GM12878 (cell line): ENCODE measurements at regions of chr11 and their contacts with region 1.

Region 1: DNA sequence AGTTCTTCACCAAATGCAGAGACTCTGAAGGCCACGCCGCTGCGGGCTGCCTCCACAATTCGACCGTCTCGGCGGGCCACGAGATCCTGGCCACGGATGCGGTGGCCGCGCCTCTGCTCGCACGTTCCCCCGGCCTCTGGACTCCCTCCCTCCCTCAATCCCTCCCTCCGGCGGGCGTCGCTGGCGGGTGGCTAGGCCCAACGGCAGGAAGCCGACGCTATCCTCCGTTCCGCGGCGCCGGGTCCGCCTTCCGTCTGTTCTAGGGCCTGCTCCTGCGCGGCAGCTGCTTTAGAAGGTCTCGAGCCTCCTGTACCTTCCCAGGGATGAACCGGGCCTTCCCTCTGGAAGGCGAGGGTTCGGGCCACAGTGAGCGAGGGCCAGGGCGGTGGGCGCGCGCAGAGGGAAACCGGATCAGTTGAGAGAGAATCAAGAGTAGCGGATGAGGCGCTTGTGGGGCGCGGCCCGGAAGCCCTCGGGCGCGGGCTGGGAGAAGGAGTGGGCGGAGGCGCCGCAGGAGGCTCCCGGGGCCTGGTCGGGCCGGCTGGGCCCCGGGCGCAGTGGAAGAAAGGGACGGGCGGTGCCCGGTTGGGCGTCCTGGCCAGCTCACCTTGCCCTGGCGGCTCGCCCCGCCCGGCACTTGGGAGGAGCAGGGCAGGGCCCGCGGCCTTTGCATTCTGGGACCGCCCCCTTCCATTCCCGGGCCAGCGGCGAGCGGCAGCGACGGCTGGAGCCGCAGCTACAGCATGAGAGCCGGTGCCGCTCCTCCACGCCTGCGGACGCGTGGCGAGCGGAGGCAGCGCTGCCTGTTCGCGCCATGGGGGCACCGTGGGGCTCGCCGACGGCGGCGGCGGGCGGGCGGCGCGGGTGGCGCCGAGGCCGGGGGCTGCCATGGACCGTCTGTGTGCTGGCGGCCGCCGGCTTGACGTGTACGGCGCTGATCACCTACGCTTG is at the start of gene FUT4:
- DNase-seq: no peak
- ATAC-seq: peak; percentile 88
- H3K4me3 ChIP-seq: peak within 1 kb of the TSS; percentile 80
- H3K27ac ChIP-seq: peak within 1 kb of the TSS; percentile 79
- H3K4me1 ChIP-seq: no peaks in the 10 kb centered on the region
- H3K27me3 ChIP-seq: no peaks in the 10 kb centered on the region
- CTCF ChIP-seq: peak in 1 of 3 experiments; percentile 2; a peak in 2 of 6 replicates
- EP300 ChIP-seq: no peak
- POLR2A ChIP-seq: peak; percentile 80
- RAD21 ChIP-seq: no peak
- polyA plus RNA-seq, gene FUT4: 0.68 TPM

Region 2: GRCh38 chr11:94563176-94563847 is 19.3 kb after region 1 on chr11:
- CTCF ChIA-PET with region 1: interaction called, 12 read pairs
- POLR2A ChIA-PET with region 1: interaction called, 4 read pairs
- RAD21 ChIA-PET with region 1: interaction called, 4 read pairs
- SMC1A ChIA-PET with region 1: interaction called, 8 read pairs
- in situ Hi-C with region 1: no loop called
- intact Hi-C with region 1: no loop called
- DNase-seq: no peak
- ATAC-seq: no peak
- H3K4me3 ChIP-seq: no peak overlapping the region
- H3K27ac ChIP-seq: no peak overlapping the region
- H3K4me1 ChIP-seq: no peaks in the 10 kb centered on the region
- H3K27me3 ChIP-seq: no peaks in the 10 kb centered on the region
- CTCF ChIP-seq: no peak
- EP300 ChIP-seq: no peak
- POLR2A ChIP-seq: no peak
- RAD21 ChIP-seq: no peak

Region 3: GRCh38 chr11:94583866-94584500 is 40.0 kb after region 1 on chr11:
- CTCF ChIA-PET with region 1: interaction called, 17 read pairs
- POLR2A ChIA-PET with region 1: interaction called, 27 read pairs
- RAD21 ChIA-PET with region 1: interaction called, 33 read pairs
- SMC1A ChIA-PET with region 1: interaction called, 107 read pairs
- in situ Hi-C with region 1: no loop called
- intact Hi-C with region 1: loop called (anchors 2 kb)
- DNase-seq: peak; percentile 62
- ATAC-seq: peak; percentile 73
- H3K4me3 ChIP-seq: peak overlapping the region; percentile 8
- H3K27ac ChIP-seq: peak overlapping the region; percentile 84
- H3K4me1 ChIP-seq: peaks cover 22% of the 10 kb centered on the region
- H3K27me3 ChIP-seq: no peaks in the 10 kb centered on the region
- CTCF ChIP-seq: no peak
- EP300 ChIP-seq: peak; percentile 81 to 82; a peak in 3 of 4 replicates
- POLR2A ChIP-seq: no peak
- RAD21 ChIP-seq: no peak

Region 4: GRCh38 chr11:94593030-94593429 is 49.1 kb after region 1 on chr11:
- CTCF ChIA-PET with region 1: interaction called, 26 read pairs
- POLR2A ChIA-PET with region 1: interaction called, 27 read pairs
- RAD21 ChIA-PET with region 1: interaction called, 21 read pairs
- SMC1A ChIA-PET with region 1: interaction called, 107 read pairs
- in situ Hi-C with region 1: no loop called
- intact Hi-C with region 1: no loop called
- DNase-seq: no peak
- ATAC-seq: peak; percentile 82
- H3K4me3 ChIP-seq: no peak overlapping the region
- H3K27ac ChIP-seq: no peak overlapping the region
- H3K4me1 ChIP-seq: no peaks in the 10 kb centered on the region
- H3K27me3 ChIP-seq: no peaks in the 10 kb centered on the region
- CTCF ChIP-seq: no peak
- EP300 ChIP-seq: peak in 1 of 2 experiments; percentile 41; a peak in 1 of 4 replicates
- POLR2A ChIP-seq: no peak
- RAD21 ChIP-seq: no peak

Region 5: DNA sequence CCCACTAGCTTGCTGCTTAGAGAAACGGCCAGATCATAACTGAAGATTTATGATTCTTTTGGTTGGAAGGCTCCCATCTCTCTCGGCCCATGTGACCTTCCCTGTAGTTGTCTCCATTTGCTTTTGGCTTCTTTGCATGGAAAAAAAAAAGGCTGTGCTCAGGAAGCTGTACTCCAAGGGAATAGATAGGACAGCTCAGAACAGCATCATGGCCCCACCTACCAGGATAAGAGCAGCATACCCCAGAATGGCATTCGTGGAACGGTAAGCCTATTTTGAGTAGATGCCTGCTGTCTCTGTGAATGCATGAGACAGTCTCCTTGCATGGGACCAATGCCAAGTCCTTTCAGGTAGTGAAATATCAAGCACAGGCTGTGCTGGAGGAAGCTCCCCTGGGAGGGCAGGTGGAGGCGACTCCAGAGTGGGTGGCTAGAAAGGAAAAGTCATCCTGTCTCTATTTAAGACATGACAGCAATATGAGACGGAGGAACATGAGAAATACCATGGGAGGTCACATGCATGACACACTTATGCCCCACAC is 130.1 kb after region 1 on chr11:
- CTCF ChIA-PET with region 1: no interaction called
- POLR2A ChIA-PET with region 1: no interaction called
- RAD21 ChIA-PET with region 1: no interaction called
- SMC1A ChIA-PET with region 1: no interaction called
- in situ Hi-C with region 1: no loop called
- intact Hi-C with region 1: no loop called
- DNase-seq: no peak
- ATAC-seq: no peak
- H3K4me3 ChIP-seq: no peak overlapping the region
- H3K27ac ChIP-seq: no peak overlapping the region
- H3K4me1 ChIP-seq: no peaks in the 10 kb centered on the region
- H3K27me3 ChIP-seq: no peaks in the 10 kb centered on the region; a peak in 1 of 4 replicates
- CTCF ChIP-seq: no peak
- EP300 ChIP-seq: no peak
- POLR2A ChIP-seq: no peak
- RAD21 ChIP-seq: no peak